ENCODE measurements at regions of chr5 and their contacts with region 1.

Region 1: DNA sequence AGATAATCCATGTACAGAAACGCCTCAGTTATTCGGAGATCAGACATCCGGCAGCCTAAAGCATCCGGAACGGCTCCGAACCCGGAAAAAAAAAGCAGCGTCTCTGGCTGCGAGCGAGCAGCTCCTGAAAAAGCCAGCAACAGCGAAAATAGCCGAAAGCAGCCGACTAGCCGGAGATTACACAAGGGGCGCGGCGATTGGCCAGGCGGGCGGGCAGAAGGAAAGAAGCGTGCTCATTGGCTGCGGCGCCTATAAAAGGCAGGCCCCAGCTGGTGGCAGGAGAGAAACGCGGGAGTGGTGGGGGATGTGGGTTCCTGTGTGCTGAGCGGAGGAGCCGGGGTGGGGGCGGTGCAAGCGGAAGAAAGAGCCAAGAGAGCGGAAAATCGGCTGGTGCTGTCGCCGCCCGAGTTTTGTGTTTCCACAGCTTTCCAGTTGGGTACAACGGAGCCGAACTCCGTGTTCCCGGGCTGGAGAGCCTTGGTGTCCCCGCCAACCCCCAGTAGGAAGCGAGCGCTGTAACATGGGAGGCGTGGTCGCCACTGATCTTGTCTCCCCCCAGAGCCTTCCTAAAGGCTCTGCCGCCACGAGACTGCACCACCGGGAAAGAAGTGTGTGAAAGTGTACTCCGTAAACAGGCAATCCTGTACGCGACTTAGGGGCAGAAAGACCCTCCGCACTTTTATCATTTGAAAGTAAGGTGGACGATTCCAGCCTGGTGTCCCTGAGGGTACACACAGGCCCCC is at the start of gene ARL15:
- DNase-seq: peak; percentile 99
- H3K4me3 Mint-ChIP-seq: peak within 1 kb of the TSS; percentile 88
- H3K27ac Mint-ChIP-seq: peak within 1 kb of the TSS; percentile 88
- H3K4me1 Mint-ChIP-seq: peaks cover 22% of the 10 kb centered on the region
- H3K27me3 Mint-ChIP-seq: peaks cover 18% of the 10 kb centered on the region
- total RNA-seq, gene ARL15: 4.5 and 7.4 TPM in 2 replicates

Region 2: GRCh38 chr5:54415896-54416601 is 105.4 kb after region 1 on chr5:
- intact Hi-C with region 1: loop called (anchors 2 kb)
- DNase-seq: no peak
- H3K4me3 Mint-ChIP-seq: no peak overlapping the region
- H3K27ac Mint-ChIP-seq: no peak overlapping the region
- H3K4me1 Mint-ChIP-seq: no peaks in the 10 kb centered on the region
- H3K27me3 Mint-ChIP-seq: peaks cover 29% of the 10 kb centered on the region

Region 3: GRCh38 chr5:54867310-54867944 is 556.8 kb after region 1 on chr5:
- intact Hi-C with region 1: loop called (anchors 10 kb)
- DNase-seq: peak; percentile 67
- H3K4me3 Mint-ChIP-seq: no peak overlapping the region
- H3K27ac Mint-ChIP-seq: no peak overlapping the region
- H3K4me1 Mint-ChIP-seq: peaks cover 22% of the 10 kb centered on the region
- H3K27me3 Mint-ChIP-seq: peaks cover 65% of the 10 kb centered on the region